Activated B cell treated with CpG ODN at 0.5 μM for 24 hours (primary cell): ENCODE measurements at regions of chr2 and their contacts with region 1.

Region 1: DNA sequence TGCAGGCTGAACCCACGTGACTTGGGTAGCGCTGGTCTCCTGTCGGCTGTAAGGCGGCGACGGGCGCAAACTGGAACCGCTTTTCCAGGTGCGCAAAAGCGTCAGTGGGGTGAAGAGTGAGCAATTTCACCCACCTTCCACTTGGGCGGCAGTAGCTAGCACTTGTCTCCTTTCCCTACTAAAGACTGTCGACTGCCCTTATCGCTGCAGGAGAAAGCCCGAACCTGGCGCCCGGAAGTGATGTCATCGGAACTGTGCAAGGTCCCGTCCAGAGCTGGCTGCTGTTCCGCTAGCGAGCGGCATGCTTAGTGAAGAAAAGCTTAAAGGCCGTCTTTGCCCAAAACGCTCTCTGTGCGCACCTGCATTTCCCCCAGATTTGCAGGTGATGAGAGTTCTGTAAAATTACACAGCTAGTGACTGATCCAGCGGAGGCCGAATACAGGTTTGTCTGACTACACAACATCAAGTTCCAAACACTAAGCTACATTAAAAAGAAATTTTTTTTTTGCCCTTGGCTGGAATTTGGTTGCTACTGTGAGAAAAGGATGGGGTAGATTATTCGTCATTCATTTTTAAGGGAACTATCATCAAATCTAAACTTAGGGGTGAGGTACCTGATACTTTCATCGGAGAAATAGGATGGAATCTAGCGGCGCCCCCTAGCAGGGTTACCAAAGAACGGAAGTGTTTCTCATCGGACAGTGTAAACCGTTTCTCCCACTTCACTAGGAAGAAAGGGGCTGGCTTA is at the start of gene OSGEPL1:
- DNase-seq: peak; percentile 81
- ATAC-seq: peak; percentile 93
- H3K4me3 Mint-ChIP-seq: peak within 1 kb of the TSS; percentile 95
- H3K27ac Mint-ChIP-seq: peak within 1 kb of the TSS; percentile 97
- H3K4me1 Mint-ChIP-seq: peaks cover 8% of the 10 kb centered on the region
- H3K27me3 Mint-ChIP-seq: no peaks in the 10 kb centered on the region
- CTCF ChIP-seq: no peak
- total RNA-seq, gene OSGEPL1: 10.6 and 12.3 TPM in 2 replicates

Region 2: DNA sequence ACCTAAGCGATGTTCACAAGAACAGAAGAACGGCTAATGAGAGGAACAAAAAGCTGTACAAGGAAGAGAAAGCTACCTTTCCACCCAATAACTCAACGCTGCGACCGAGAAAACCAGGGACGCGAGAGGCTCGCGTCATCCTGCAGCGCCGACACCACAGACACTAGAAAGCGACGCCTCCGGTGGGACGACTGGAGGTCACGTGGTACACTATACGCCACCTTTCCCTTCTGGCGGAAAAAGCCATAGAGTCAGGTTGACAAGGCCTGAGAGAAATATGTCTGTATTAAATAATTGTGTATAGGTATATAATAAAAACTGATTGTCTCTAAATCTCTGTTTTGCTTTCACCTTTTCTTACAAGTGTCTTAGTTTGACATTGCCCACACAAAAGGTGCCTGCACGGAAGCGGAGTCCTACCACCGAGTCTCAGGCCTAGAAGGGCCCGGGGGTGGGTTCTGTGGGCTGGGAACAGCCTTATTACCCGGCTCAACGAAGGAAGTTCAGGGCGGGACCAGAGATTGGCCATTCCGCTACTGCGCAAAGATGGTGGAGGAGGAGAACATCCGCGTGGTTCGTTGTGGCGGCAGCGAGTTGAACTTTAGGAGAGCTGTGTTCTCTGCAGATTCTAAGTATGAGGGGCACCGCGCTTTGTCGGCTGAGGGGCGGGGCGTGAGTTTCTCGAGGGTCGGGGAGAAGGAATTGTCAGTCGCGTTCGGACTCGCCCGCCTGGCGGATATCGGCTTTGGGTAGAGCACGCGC is 321.6 kb before region 1 on chr2 and contains the start of gene WDR75:
- CTCF ChIA-PET with region 1: no interaction called
- POLR2A ChIA-PET with region 1: interaction called, 6 read pairs
- intact Hi-C with region 1: loop called (anchors 1 kb)
- DNase-seq: peak; percentile 79
- ATAC-seq: peak; percentile 94
- H3K4me3 Mint-ChIP-seq: peak within 1 kb of the TSS; percentile 98
- H3K27ac Mint-ChIP-seq: peak within 1 kb of the TSS; percentile 99
- H3K4me1 Mint-ChIP-seq: peaks cover 26% of the 10 kb centered on the region
- H3K27me3 Mint-ChIP-seq: no peaks in the 10 kb centered on the region
- CTCF ChIP-seq: no peak
- total RNA-seq, gene WDR75: 53.0 and 61.2 TPM in 2 replicates

Region 3: GRCh38 chr2:189674374-189675112 is 88.2 kb before region 1 on chr2 and contains the start of gene ANKAR:
- CTCF ChIA-PET with region 1: interaction called, 6 read pairs
- POLR2A ChIA-PET with region 1: interaction called, 8 read pairs
- intact Hi-C with region 1: loop called (anchors 1 kb)
- DNase-seq: peak; percentile 89
- ATAC-seq: peak; percentile 97
- H3K4me3 Mint-ChIP-seq: peak within 1 kb of the TSS; percentile 96
- H3K27ac Mint-ChIP-seq: peak within 1 kb of the TSS; percentile 99
- H3K4me1 Mint-ChIP-seq: peaks cover 38% of the 10 kb centered on the region
- H3K27me3 Mint-ChIP-seq: no peaks in the 10 kb centered on the region
- CTCF ChIP-seq: peak; percentile 67
- total RNA-seq, gene ANKAR: 13.1 and 14.5 TPM in 2 replicates

Region 4: GRCh38 chr2:189698020-189698887 is 64.5 kb before region 1 on chr2:
- CTCF ChIA-PET with region 1: interaction called, 3 read pairs
- POLR2A ChIA-PET with region 1: no interaction called
- intact Hi-C with region 1: loop called (anchors 2 kb)
- DNase-seq: no peak
- ATAC-seq: peak; percentile 58
- H3K4me3 Mint-ChIP-seq: no peak overlapping the region
- H3K27ac Mint-ChIP-seq: no peak overlapping the region
- H3K4me1 Mint-ChIP-seq: peaks cover 2% of the 10 kb centered on the region
- H3K27me3 Mint-ChIP-seq: no peaks in the 10 kb centered on the region
- CTCF ChIP-seq: no peak

Region 5: GRCh38 chr2:189751080-189751658 is 11.6 kb before region 1 on chr2:
- CTCF ChIA-PET with region 1: interaction called, 16 read pairs
- POLR2A ChIA-PET with region 1: interaction called, 5 read pairs
- intact Hi-C with region 1: loop called (anchors 2 kb)
- DNase-seq: no peak
- ATAC-seq: peak; percentile 56
- H3K4me3 Mint-ChIP-seq: no peak overlapping the region
- H3K27ac Mint-ChIP-seq: no peak overlapping the region
- H3K4me1 Mint-ChIP-seq: no peaks in the 10 kb centered on the region
- H3K27me3 Mint-ChIP-seq: no peaks in the 10 kb centered on the region
- CTCF ChIP-seq: no peak

Region 6: DNA sequence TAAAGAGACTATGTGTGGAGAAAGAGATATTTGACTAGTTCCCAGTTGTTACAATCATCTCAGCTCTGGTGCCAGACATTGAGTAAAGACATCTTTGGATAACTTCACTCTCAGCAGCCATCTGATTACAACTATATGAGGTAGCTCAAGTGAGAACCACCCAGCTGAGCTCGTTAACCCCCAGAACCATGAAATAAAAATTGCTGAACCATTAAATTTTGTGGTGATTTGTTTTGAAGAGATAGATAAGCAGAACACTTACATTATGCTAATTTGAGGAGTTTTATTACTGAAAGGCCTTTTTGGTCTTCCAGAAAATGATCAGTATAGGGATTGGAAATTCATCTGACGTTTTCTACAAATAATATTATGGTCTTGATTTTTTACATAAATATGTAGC is 122.6 kb after region 1 on chr2:
- CTCF ChIA-PET with region 1: no interaction called
- POLR2A ChIA-PET with region 1: no interaction called
- intact Hi-C with region 1: no loop called
- DNase-seq: no peak
- ATAC-seq: no peak
- H3K4me3 Mint-ChIP-seq: no peak overlapping the region
- H3K27ac Mint-ChIP-seq: no peak overlapping the region
- H3K4me1 Mint-ChIP-seq: no peaks in the 10 kb centered on the region
- H3K27me3 Mint-ChIP-seq: no peaks in the 10 kb centered on the region
- CTCF ChIP-seq: no peak